Psoas muscle (tissue), 8 donors: ENCODE measurements at regions of chr7 and their contacts with region 1.

Region 1: DNA sequence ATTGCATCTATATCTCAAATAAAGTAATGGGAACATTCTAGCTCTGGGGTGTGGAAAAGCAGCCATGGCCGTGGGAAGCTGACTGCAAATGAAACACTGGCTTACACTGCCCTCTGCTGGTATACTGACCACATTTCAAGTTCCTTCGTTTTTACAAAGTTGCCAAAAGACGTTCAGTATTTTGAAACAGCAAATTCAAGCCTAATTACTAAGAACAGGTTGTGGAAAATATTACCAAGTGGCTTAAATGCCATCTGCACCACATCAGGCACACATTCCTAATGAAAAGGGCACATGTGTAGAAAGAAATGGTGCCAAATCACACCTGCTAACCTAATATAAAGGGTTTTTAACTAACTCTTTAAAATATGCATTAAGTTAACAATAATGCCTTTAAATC is 83.9 kb downstream of the JAZF1 start:
- DNase-seq: no peak
- ATAC-seq: peak; percentile 76 to 87 (median 85)
- H3K4me3 ChIP-seq: no peak overlapping the region
- H3K27ac ChIP-seq: no peak overlapping the region
- H3K4me1 ChIP-seq: peaks cover 5% of the 10 kb centered on the region
- H3K27me3 ChIP-seq: no peaks in the 10 kb centered on the region
- CTCF ChIP-seq: peak; percentile 88

Region 2: GRCh38 chr7:27890205-27890849 is 206.4 kb before region 1 on chr7:
- intact Hi-C with region 1: no loop called
- DNase-seq: no peak
- ATAC-seq: no peak
- H3K4me3 ChIP-seq: no peak overlapping the region
- H3K27ac ChIP-seq: no peak overlapping the region
- H3K4me1 ChIP-seq: no peaks in the 10 kb centered on the region
- H3K27me3 ChIP-seq: no peaks in the 10 kb centered on the region
- CTCF ChIP-seq: no peak

Region 3: DNA sequence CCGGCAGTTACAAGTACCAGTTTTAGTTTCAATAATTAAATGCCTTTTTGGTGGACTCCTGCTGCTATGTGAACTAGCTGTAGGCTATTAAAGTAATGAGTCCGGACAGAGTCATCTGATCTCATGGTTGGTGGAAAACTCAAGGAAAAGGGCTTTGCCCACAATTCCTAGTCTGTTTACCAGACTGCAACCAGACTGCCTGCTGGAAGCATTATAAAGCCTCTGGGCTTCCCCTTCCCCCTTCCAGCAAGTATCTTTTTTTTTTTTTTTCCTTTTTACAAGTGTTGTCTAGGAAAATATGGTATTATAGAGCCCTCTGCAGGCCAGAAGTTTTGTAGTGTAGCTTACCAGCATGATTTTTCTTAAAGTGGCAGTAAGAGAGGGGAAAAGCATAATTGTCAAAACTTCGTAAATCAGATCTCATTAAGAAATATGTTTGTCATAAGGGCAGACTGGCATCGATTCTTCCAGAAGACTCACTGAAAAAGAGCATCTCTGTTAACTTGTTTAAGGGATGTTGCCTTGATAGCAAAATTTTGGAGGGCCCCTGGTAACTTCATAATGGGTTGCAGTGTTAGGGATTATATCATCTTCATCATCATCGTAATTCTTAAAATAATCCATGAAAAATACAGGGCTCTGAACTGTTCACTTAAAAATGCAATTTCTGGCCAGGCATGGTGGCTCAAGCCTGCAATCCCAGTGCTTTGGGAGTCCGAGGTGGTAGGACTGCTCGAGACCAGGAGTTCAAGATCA is 175.5 kb before region 1 on chr7:
- intact Hi-C with region 1: loop called in 1 of 2 experiments (anchors 10 kb)
- DNase-seq: no peak
- ATAC-seq: peak; percentile 52 to 87 (median 60)
- H3K4me3 ChIP-seq: peak overlapping the region; percentile 17
- H3K27ac ChIP-seq: no peak overlapping the region
- H3K4me1 ChIP-seq: no peaks in the 10 kb centered on the region
- H3K27me3 ChIP-seq: no peaks in the 10 kb centered on the region
- CTCF ChIP-seq: peak; percentile 60

Region 4: GRCh38 chr7:28062197-28062991 is 34.3 kb before region 1 on chr7:
- intact Hi-C with region 1: loop called (anchors 2 to 5 kb)
- DNase-seq: peak; percentile 67 to 83
- ATAC-seq: peak; percentile 62 to 94 (median 87)
- H3K4me3 ChIP-seq: no peak overlapping the region
- H3K27ac ChIP-seq: no peak overlapping the region
- H3K4me1 ChIP-seq: no peaks in the 10 kb centered on the region
- H3K27me3 ChIP-seq: no peaks in the 10 kb centered on the region
- CTCF ChIP-seq: peak; percentile 72

Region 5: GRCh38 chr7:28408960-28409715 is 312.4 kb after region 1 on chr7:
- intact Hi-C with region 1: no loop called
- DNase-seq: peak; percentile 96 to 97
- ATAC-seq: peak; percentile 83 to 90 (median 88)
- H3K4me3 ChIP-seq: peak overlapping the region; percentile 84
- H3K27ac ChIP-seq: peak overlapping the region; percentile 95
- H3K4me1 ChIP-seq: peaks cover 14% of the 10 kb centered on the region
- H3K27me3 ChIP-seq: no peaks in the 10 kb centered on the region
- CTCF ChIP-seq: no peak